ENCODE measurements at regions of chr5 and their contacts with region 1.

Region 1: DNA sequence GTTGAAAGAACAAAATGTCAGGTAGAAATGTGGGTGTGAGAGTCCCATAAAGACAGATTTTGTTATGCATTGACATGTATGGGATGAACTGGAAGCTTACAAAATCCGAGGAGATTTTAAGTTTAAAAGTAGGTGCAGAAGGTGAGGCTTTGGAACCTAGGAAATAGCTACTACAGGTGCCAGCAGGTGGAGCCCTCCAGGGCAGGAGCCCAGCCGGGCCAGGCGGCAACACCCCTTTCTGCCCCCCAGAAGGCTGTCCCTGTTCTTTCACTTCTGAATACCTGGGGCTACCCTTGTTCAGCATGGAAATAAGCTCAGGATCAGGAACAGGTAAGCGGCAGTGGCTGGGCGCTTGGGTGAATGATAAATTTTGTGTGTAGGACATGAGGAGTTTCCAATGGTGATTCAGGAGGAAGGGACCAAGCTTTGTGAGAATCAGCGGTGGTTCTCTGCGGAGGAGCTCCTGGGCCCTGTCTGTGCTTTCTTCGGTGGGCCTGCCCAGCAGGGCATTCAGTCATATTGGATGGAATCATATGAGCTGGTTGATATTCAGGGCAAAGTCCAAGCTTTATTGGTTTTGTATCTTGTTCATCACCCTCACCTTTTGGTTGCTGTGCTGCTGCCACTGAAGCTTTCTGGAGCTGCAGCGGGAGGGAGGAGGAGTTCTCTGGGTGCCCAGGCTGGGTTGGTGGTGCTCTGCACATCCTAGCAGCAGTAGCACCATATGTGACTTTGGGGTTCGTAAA is 12.3 kb downstream of the PCBD2 start:
- DNase-seq: no peak
- ATAC-seq: peak; percentile 83
- H3K4me3 ChIP-seq: no peak overlapping the region
- H3K27ac ChIP-seq: no peak overlapping the region
- H3K4me1 ChIP-seq: no peaks in the 10 kb centered on the region
- H3K27me3 ChIP-seq: no peaks in the 10 kb centered on the region
- CTCF ChIP-seq: peak; percentile 61 to 66 (median 62)
- POLR2A ChIP-seq: no peak
- RAD21 ChIP-seq: peak; percentile 58

Region 2: GRCh38 chr5:134938020-134938419 is 20.8 kb after region 1 on chr5:
- CTCF ChIA-PET with region 1: interaction called, 3 read pairs
- POLR2A ChIA-PET with region 1: no interaction called
- RAD21 ChIA-PET with region 1: no interaction called
- intact Hi-C with region 1: loop called (anchors 2 kb)
- DNase-seq: no peak
- ATAC-seq: no peak
- H3K4me3 ChIP-seq: no peak overlapping the region
- H3K27ac ChIP-seq: no peak overlapping the region
- H3K4me1 ChIP-seq: no peaks in the 10 kb centered on the region
- H3K27me3 ChIP-seq: no peaks in the 10 kb centered on the region
- CTCF ChIP-seq: no peak
- POLR2A ChIP-seq: no peak
- RAD21 ChIP-seq: no peak

Region 3: GRCh38 chr5:135191084-135191826 is 274.0 kb after region 1 on chr5:
- CTCF ChIA-PET with region 1: interaction called, 22 read pairs
- POLR2A ChIA-PET with region 1: no interaction called
- RAD21 ChIA-PET with region 1: interaction called in 1 of 2 experiments, 3 read pairs
- intact Hi-C with region 1: loop called (anchors 1 kb)
- DNase-seq: peak; percentile 57
- ATAC-seq: peak; percentile 97
- H3K4me3 ChIP-seq: peak overlapping the region; percentile 40 to 53
- H3K27ac ChIP-seq: no peak overlapping the region; the same call in 1 of the 2 replicates
- H3K4me1 ChIP-seq: peaks cover 2 to 17% of the 10 kb centered on the region in 2 experiments
- H3K27me3 ChIP-seq: no peaks in the 10 kb centered on the region
- CTCF ChIP-seq: peak; percentile 90 to 96 (median 93)
- POLR2A ChIP-seq: no peak
- RAD21 ChIP-seq: peak; percentile 99

Region 4: DNA sequence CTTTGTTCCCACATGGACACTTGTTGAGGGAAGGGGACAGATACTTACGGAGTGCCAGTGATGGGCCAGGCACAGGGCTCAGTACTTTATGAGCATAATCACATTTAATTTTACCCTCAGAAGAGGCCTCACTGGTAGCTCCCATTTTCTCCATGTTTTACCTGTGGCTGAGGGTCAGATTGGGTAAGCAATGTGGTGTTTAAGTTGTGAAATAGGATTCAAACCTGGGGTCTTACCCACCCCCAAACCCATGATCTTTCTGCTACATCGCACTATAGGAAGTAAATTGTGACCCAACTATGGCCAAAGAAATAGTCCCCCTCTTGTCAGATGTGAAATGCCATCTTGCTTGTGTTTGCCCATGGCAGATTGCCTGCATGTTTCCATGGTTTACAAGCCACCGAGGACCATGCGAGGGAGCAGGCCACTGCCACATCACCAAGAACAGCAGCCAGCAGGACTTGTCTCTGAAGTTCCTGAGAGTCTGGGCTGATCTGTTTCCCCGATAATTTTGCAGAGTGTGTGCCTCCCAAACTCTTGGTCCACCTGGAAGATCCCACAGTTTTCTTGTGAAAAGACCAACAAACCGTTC is 386.4 kb after region 1 on chr5:
- CTCF ChIA-PET with region 1: no interaction called
- POLR2A ChIA-PET with region 1: no interaction called
- RAD21 ChIA-PET with region 1: no interaction called
- intact Hi-C with region 1: no loop called
- DNase-seq: no peak
- ATAC-seq: no peak
- H3K4me3 ChIP-seq: no peak overlapping the region
- H3K27ac ChIP-seq: no peak overlapping the region
- H3K4me1 ChIP-seq: peaks cover 0 to 12% of the 10 kb centered on the region in 2 experiments; a peak in 1 of 4 replicates
- H3K27me3 ChIP-seq: no peaks in the 10 kb centered on the region
- CTCF ChIP-seq: no peak
- POLR2A ChIP-seq: no peak
- RAD21 ChIP-seq: no peak

Region 5: DNA sequence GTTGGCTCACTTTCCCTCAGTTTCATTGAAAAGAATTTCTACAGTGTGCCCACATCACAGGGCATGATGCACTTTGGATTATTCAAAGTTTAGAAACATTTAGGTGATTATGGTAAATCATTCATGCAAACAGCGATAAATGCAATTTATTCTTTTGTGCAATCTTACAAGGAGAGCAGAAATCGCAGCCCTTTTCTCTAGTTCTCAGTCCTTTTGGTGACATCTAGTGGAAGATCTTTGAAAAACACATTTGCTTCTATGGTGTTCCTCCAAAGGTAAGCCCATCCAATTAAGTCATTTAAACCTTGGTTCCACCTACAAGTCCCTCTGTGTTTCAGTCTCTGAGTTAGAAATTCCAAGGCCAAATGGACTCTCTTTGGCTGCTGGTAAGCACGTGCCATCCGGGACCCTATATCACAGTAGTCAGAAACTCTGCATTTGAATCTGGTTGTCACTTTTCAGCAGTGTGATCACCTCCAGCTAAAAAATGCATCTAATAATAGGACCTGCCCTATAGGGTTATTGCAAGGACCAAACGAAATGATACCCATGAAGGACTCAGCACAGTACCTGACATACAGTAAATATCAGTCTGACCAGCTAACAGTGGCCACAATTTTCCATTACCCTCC is 415.4 kb after region 1 on chr5:
- CTCF ChIA-PET with region 1: no interaction called
- POLR2A ChIA-PET with region 1: no interaction called
- RAD21 ChIA-PET with region 1: no interaction called
- intact Hi-C with region 1: loop called (anchors 1 kb)
- DNase-seq: peak; percentile 49
- ATAC-seq: peak; percentile 73
- H3K4me3 ChIP-seq: no peak overlapping the region
- H3K27ac ChIP-seq: no peak overlapping the region
- H3K4me1 ChIP-seq: no peaks in the 10 kb centered on the region
- H3K27me3 ChIP-seq: no peaks in the 10 kb centered on the region
- CTCF ChIP-seq: peak; percentile 53 to 74 (median 68)
- POLR2A ChIP-seq: no peak
- RAD21 ChIP-seq: peak; percentile 88